ENCODE measurements at regions of chr1 and their contacts with region 1.

Region 1: DNA sequence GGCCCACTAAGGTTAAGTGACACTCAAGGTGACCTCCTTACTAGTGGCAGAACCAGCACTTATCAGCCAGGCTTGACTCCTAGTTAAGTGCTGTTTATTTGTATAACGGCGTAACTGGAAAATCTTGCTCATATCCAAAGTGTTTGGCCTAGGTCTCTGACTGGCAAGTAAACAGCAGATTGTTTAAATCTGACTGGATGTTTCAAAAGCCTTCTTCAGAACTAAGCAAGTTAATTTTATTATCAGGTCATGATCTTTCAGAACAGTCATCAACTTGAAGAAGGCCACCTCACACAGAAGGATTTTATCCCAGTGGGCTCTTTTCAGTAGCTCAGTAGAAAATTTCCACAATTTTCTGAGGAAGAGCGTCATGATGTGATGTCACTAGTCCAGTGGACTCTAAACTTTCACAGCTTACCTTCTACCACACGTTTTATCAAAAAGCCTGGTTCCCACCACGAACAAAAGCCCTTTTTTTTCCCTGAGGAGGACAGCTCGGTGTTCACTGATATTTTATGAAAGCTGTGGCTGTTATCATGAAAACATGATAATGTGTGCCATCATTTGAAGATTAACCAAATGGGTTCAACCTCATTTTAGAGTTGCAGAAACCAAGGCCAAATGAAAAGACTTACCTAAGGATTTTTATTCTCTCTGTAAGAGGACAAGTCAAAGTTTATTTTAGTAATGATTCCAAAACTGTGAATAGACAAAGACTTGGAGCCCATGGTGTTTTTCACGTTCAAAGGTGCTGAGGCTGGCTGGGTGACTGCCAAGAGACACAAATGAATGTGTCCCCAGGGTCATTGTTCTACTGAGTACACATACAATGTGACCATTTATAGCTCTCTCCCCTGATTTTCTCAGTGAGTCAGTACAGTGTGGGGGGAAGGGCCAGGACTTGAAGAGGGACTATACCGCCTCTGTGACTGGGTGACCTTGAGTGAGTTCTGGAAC is 9.1 kb downstream of the SGIP1 start:
- DNase-seq: peak; percentile 3 to 84 (median 48)
- H3K4me3 ChIP-seq: peak overlapping the region in 24 of 59 donors; percentile 0 to 32 (median 10)
- H3K27ac ChIP-seq: peak overlapping the region in 58 of 59 donors; percentile 11 to 90 (median 82)
- H3K27me3 ChIP-seq: no peaks in the 10 kb centered on the region
- CTCF ChIP-seq: peak in 1 of 56 donors; percentile 11

Region 2: DNA sequence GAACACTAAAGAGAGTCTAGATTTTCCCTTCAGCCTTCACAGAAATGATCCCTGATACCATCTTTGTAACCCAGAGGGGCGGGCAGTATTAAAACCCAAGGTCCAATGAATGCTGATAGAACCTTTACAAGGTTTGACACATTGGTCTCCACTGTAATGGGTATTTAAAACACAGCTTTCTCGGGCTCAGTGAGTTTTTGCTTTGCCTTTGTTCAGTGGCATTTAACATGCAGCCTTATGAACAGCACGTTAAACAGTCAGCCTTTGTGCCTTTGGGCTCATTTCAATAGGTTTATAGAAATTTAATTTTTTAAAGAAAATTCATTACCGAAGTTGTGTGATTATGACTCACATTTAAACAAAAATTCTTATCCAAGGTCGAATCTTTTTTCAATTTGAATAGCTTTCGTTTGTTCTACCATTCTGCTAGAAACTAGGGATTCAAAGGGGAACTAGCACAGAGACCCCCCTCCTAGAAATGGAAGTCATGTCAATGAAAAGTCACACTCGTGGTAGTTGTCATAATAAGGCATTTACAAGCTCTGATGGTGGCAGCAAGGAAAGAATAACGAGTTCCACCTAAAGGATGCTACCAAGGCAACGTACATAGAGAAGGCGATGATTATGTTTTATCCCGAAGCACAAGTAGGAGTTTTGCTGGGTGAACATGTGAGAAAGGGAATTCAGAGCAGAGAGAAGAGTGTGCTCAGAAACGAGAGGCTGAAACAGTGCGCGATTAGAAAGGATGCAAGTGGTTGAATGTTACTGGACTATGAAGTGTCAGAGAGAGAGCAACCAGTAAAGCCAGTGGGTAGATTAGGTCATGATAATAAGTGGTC is 57.0 kb after region 1 on chr1:
- intact Hi-C with region 1: loop called in 1 of 2 experiments (anchors 2 kb)
- DNase-seq: no peak
- H3K4me3 ChIP-seq: peak overlapping the region in 27 of 59 donors; percentile 4 to 50 (median 18)
- H3K27ac ChIP-seq: peak overlapping the region in 9 of 59 donors; percentile 7 to 49 (median 20)
- H3K27me3 ChIP-seq: no peaks in the 10 kb centered on the region
- CTCF ChIP-seq: no peak

Measured in dorsolateral prefrontal cortex (tissue), 120 donors.